ENCODE measurements at regions of chr5 and their contacts with region 1.

Region 1: GRCh38 chr5:154189819-154190594 is 526 bp upstream of the GALNT10 start:
- DNase-seq: peak; percentile 89
- H3K4me3 ChIP-seq: peak overlapping the region; percentile 95
- H3K27ac ChIP-seq: peak overlapping the region; percentile 93
- H3K4me1 ChIP-seq: peaks cover 57% of the 10 kb centered on the region
- H3K27me3 ChIP-seq: no peaks in the 10 kb centered on the region
- CTCF ChIP-seq: peak; percentile 49

Region 2: GRCh38 chr5:153974131-153974812 is 215.7 kb before region 1 on chr5:
- intact Hi-C with region 1: loop called (anchors 10 kb)
- DNase-seq: no peak
- H3K4me3 ChIP-seq: no peak overlapping the region
- H3K27ac ChIP-seq: no peak overlapping the region
- H3K4me1 ChIP-seq: no peaks in the 10 kb centered on the region
- H3K27me3 ChIP-seq: peaks cover 13% of the 10 kb centered on the region
- CTCF ChIP-seq: peak; percentile 81

Region 3: GRCh38 chr5:154147666-154148065 is 42.3 kb before region 1 on chr5:
- intact Hi-C with region 1: no loop called
- DNase-seq: no peak
- H3K4me3 ChIP-seq: no peak overlapping the region
- H3K27ac ChIP-seq: no peak overlapping the region
- H3K4me1 ChIP-seq: peaks cover 51% of the 10 kb centered on the region
- H3K27me3 ChIP-seq: no peaks in the 10 kb centered on the region
- CTCF ChIP-seq: no peak

Measured in left ventricle myocardium inferior (tissue), 1 donor.